Right cardiac atrium (tissue), 5 donors: ENCODE measurements at regions of chr20 and their contacts with region 1.

Region 1: DNA sequence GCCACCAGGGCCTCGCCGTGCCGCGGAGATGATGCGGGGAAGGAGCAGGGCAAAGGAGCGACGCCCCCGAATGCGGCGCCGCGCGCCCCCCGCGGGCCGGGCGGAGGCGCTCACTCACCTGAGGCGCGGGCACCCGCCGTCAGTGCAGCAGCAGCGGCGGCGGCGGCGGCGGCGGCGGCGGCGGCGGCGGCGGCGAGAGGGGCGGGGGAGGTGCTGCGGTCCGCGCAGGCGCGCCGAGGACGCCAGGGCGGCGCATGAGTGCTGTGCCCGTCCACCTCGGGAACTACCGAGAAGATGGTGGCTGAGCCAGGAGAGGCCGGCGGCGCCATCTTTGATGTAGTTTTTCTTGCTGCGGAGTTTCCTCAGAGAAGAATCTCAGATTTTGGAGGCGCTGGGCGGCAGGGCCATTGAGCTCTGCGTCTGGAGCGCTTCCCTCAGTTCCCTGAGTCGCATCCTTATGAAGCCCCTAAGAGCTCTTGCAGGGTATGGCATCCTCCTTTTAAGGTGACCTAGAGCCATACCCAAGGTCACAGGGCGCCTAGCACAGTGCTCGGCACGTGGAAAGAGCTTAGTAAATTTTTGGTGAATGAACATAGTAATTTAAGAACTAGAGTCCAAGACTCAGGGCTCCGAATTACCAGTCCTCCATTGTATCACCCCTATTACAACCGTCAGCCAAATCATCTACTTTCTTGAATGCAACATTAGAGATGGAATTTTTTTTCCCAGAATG is at the start of gene NDRG3:
- DNase-seq: peak; percentile 95 to 98 (median 98)
- ATAC-seq: peak; percentile 97
- H3K4me3 ChIP-seq: peak within 1 kb of the TSS; percentile 96
- H3K27ac ChIP-seq: peak within 1 kb of the TSS; percentile 99
- H3K4me1 ChIP-seq: no peaks in the 10 kb centered on the region
- H3K27me3 ChIP-seq: no peaks in the 10 kb centered on the region
- total RNA-seq, gene NDRG3: 28.0 to 40.7 (median 34.7) TPM

Region 2: DNA sequence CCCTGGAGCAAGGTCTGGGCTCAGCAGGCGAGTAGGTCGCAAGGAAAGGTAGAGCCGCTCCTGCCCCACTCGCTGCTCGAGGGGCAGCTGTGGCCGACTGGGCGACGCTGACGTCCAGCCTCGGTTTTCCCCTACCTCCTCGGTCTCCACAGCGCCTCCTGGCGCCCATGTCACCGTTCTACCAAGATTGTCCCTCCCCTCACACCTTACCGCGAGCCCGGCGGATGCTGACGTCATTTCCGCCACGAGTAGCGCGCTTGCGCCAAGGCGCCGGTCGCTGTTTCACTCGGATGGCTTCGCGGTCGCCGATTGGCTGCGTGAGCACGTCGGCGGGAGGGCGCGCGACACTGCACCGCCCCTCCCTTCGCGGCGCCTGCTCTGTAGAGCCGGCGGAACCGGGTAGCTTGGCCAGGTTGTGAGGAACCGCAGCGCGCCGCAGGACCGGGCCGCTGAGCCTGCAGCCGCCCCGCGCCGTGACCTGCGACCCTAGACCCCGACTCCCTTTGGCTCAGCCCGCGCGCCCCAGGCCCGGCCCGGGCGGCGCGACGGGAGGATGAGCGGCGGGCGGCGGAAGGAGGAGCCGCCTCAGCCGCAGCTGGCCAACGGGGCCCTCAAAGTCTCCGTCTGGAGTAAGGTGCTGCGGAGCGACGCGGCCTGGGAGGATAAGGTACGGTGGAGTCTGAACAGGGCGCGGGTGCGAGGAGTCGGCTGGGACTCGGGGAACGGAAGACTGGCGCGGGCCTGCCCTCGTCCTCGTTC is 140.5 kb before region 1 on chr20 and contains the start of gene RAB5IF:
- intact Hi-C with region 1: loop called in 1 of 4 experiments (anchors 10 kb)
- DNase-seq: peak; percentile 99 to 100 (median 100)
- ATAC-seq: peak; percentile 96 to 97
- H3K4me3 ChIP-seq: peak within 1 kb of the TSS; percentile 78
- H3K27ac ChIP-seq: peak within 1 kb of the TSS; percentile 89
- H3K4me1 ChIP-seq: peaks cover 2% of the 10 kb centered on the region
- H3K27me3 ChIP-seq: no peaks in the 10 kb centered on the region
- total RNA-seq, gene RAB5IF: 60.2 to 69.9 (median 62.9) TPM

Region 3: GRCh38 chr20:36861875-36862801 is 116.0 kb after region 1 on chr20:
- intact Hi-C with region 1: no loop called
- DNase-seq: peak; percentile 89 to 95 (median 93)
- ATAC-seq: peak; percentile 64 to 67
- H3K4me3 ChIP-seq: peak overlapping the region; percentile 94
- H3K27ac ChIP-seq: peak overlapping the region; percentile 76
- H3K4me1 ChIP-seq: peaks cover 10% of the 10 kb centered on the region
- H3K27me3 ChIP-seq: no peaks in the 10 kb centered on the region